Psoas muscle (tissue), 8 donors: ENCODE measurements at regions of chr1 and their contacts with region 1.

Region 1: GRCh38 chr1:77333501-77333900 is 51.7 kb downstream of the AK5 start:
- DNase-seq: no peak
- ATAC-seq: no peak
- H3K4me3 ChIP-seq: no peak overlapping the region
- H3K27ac ChIP-seq: no peak overlapping the region
- H3K4me1 ChIP-seq: no peaks in the 10 kb centered on the region
- H3K27me3 ChIP-seq: no peaks in the 10 kb centered on the region
- CTCF ChIP-seq: no peak

Region 2: GRCh38 chr1:77354536-77354935 is 21.0 kb after region 1 on chr1:
- intact Hi-C with region 1: loop called in 1 of 2 experiments (anchors 1 kb)
- DNase-seq: no peak
- ATAC-seq: no peak
- H3K4me3 ChIP-seq: no peak overlapping the region
- H3K27ac ChIP-seq: no peak overlapping the region
- H3K4me1 ChIP-seq: no peaks in the 10 kb centered on the region
- H3K27me3 ChIP-seq: no peaks in the 10 kb centered on the region
- CTCF ChIP-seq: no peak

Region 3: DNA sequence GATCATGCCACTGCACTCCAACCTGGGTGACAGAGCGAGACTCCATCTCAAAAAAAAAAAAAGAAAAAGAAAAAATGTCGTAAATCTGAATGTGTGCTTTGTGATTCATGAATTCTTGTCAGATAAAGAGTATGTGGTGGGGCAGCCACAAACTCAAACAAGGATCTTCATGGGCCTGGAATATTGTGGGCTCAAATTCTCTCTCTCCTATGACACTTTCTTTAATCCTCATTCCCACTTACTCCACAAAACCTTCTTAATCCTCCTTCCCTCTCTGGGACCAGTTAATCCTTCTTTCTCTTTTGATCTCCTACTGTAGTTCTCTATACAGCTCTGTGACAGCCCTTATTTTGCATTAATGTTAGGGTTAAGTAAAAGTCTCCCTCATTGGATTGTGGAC is 60.7 kb after region 1 on chr1:
- intact Hi-C with region 1: no loop called
- DNase-seq: no peak
- ATAC-seq: no peak
- H3K4me3 ChIP-seq: no peak overlapping the region
- H3K27ac ChIP-seq: no peak overlapping the region
- H3K4me1 ChIP-seq: no peaks in the 10 kb centered on the region
- H3K27me3 ChIP-seq: no peaks in the 10 kb centered on the region
- CTCF ChIP-seq: no peak